Sciatic nerve (tissue), 2 donors: ENCODE measurements at regions of chr5 and their contacts with region 1.

Region 1: DNA sequence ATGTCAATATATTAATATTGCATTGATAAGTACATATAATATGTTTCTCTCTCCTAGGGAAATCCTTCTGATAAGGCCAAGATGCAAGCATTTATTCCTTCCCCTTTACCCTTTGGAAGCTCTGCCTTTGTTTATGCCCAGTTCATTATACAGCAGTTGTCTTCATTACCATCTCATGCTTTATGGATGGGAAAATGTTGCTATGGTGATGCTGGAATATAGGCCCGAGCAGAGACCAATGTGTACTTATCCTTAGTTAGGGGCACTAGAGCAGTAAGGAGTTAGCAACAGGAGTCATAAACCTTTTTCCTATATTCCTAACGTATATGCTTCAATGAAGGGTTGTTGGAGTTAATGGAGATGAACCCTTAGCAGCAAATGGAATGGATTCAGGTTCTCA is 19.4 kb upstream of the NMUR2 start:
- DNase-seq: no peak
- ATAC-seq: no peak

Region 2: GRCh38 chr5:151363673-151364072 is 1060.8 kb before region 1 on chr5:
- intact Hi-C with region 1: loop called (anchors 5 kb)
- DNase-seq: no peak
- ATAC-seq: no peak